Naive thymus-derived CD4-positive, alpha-beta T cell (primary cell): ENCODE measurements at regions of chr3 and their contacts with region 1.

Region 1: DNA sequence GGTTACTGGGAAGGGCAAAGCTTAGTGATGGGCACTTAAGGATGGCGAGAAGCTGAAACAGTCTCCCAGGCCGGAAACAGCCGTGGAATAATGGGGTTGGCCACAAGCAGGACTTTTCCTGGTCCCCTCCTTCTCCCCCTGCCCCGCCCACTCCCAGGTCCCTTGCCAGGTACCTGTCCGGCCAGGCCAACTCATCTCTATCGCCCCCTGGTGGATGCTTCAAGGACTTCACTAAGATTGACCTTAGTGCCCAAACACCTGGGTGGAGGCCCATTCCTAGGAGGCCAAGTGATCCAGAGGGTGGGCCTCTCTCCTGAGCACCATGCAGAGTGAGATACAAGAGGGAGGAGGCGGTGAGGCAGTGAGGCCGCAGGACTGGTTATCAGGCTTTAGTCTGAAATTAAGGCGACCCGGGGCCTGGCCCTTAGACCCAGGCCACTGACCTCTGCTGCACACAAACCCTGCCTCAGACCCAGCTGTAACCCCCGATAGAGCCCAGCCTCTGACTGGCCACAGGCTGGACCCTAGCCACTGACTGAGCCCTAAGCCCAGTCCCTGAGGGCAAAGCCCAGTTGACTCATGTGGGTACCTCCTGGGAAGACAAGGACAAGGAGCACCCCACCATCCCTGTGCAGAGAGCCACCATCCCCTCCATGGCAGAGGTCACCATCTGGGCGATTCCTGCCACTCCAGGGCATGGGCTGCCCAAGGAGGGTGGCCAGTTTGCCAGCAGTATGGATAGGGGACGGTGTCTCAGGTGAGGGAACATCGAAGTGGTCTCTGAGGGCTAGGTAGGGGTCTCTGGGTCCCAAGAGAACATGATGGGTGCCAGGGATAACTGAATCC is 37.6 kb downstream of the VIPR1 start:
- DNase-seq: peak in 8 of 9 donors; percentile 31 to 69 (median 48)
- ATAC-seq: peak; percentile 76
- H3K4me3 ChIP-seq: no peak overlapping the region
- H3K4me3 Mint-ChIP-seq: no peak overlapping the region
- H3K27ac ChIP-seq: no peak overlapping the region
- H3K27ac Mint-ChIP-seq: peak overlapping the region in 7 of 9 donors; percentile 33 to 95 (median 67)
- H3K4me1 ChIP-seq: peaks cover 0 to 9% of the 10 kb centered on the region in 2 donors
- H3K4me1 Mint-ChIP-seq: peaks cover 2 to 36% (median 31%) of the 10 kb centered on the region in 7 donors
- H3K27me3 ChIP-seq: no peaks in the 10 kb centered on the region
- H3K27me3 Mint-ChIP-seq: no peaks in the 10 kb centered on the region

Region 2: DNA sequence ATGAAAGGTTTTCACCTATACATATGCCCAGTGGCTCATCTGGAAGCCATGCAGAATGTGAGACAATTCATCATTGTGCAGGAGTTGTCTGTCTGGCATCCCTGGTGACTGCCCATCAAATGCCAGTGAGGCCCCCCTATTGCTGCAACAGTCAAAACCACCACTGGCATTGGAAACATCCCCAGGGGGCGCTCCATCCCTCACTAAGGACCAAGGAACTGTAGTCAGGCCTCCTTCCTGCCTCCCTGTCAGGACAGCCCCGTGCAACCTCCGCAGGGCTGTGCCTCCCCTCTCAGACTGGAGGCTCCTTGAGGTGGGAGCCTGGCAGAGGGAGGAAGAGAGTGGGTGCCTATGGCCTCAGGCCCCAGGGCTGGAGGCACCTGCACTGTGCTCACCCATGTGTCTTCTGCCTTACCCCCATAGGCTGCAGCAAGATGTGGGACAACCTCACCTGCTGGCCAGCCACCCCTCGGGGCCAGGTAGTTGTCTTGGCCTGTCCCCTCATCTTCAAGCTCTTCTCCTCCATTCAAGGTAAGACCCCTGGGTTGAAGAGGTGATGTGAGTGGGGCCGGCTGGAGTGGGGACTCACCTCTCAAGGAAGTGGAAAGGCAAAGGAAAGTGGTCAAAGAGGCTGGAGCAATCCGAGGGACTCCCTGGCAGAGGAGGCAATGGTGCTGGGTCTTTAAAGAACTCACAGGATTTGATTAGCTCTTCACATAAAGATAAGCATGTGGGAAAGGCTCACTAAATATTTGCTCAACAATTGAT is 21.1 kb before region 1 on chr3:
- CTCF ChIA-PET with region 1: interaction called, 37 read pairs
- POLR2A ChIA-PET with region 1: interaction called, 3 read pairs
- intact Hi-C with region 1: loop called (anchors 1 to 2 kb)
- DNase-seq: peak in 3 of 9 donors; percentile 36 to 52 (median 49)
- ATAC-seq: peak; percentile 56
- H3K4me3 ChIP-seq: no peak overlapping the region
- H3K4me3 Mint-ChIP-seq: peak overlapping the region in 6 of 10 donors; percentile 28 to 73 (median 67)
- H3K27ac ChIP-seq: peak overlapping the region; percentile 51
- H3K27ac Mint-ChIP-seq: peak overlapping the region in 8 of 9 donors; percentile 73 to 95 (median 86)
- H3K4me1 ChIP-seq: peaks cover 0 to 23% of the 10 kb centered on the region in 2 donors
- H3K4me1 Mint-ChIP-seq: peaks cover 19 to 55% (median 39%) of the 10 kb centered on the region in 7 donors
- H3K27me3 ChIP-seq: no peaks in the 10 kb centered on the region
- H3K27me3 Mint-ChIP-seq: no peaks in the 10 kb centered on the region

Region 3: GRCh38 chr3:42526616-42527367 is 13.3 kb before region 1 on chr3:
- CTCF ChIA-PET with region 1: interaction called, 23 read pairs
- POLR2A ChIA-PET with region 1: interaction called, 6 read pairs
- intact Hi-C with region 1: no loop called
- DNase-seq: peak in 7 of 9 donors; percentile 36 to 51 (median 44)
- ATAC-seq: peak; percentile 77
- H3K4me3 ChIP-seq: peak overlapping the region; percentile 23
- H3K4me3 Mint-ChIP-seq: peak overlapping the region; percentile 66 to 86 (median 73)
- H3K27ac ChIP-seq: peak overlapping the region; percentile 60
- H3K27ac Mint-ChIP-seq: peak overlapping the region; percentile 86 to 99 (median 92)
- H3K4me1 ChIP-seq: peaks cover 42 to 59% of the 10 kb centered on the region in 2 donors
- H3K4me1 Mint-ChIP-seq: peaks cover 39 to 83% (median 67%) of the 10 kb centered on the region in 7 donors
- H3K27me3 ChIP-seq: no peaks in the 10 kb centered on the region
- H3K27me3 Mint-ChIP-seq: no peaks in the 10 kb centered on the region

Region 4: DNA sequence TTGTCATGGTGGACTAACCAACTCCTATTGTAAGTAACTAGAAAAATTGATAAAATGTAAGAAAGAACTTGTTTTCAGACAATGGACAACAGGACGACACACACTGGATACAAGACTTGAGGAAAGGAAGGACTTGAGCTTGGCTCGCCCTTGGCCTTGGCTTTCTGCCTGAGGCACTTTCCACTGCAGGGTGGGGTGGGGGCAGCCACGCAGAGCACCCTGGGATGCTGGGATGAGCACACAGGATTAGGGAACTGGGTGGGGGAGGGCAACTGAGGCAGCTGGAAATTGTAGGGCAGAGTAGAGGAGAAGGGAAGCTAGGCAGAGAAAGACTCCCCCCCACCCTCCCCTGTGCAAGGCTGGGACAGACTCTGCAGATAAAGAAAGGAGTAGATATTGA is 188.0 kb after region 1 on chr3:
- CTCF ChIA-PET with region 1: no interaction called
- POLR2A ChIA-PET with region 1: no interaction called
- intact Hi-C with region 1: no loop called
- DNase-seq: no peak
- ATAC-seq: no peak
- H3K4me3 ChIP-seq: no peak overlapping the region
- H3K4me3 Mint-ChIP-seq: no peak overlapping the region
- H3K27ac ChIP-seq: no peak overlapping the region
- H3K27ac Mint-ChIP-seq: no peak overlapping the region
- H3K4me1 ChIP-seq: no peaks in the 10 kb centered on the region
- H3K4me1 Mint-ChIP-seq: no peaks in the 10 kb centered on the region
- H3K27me3 ChIP-seq: no peaks in the 10 kb centered on the region
- H3K27me3 Mint-ChIP-seq: peaks cover 7 to 19% (median 10%) of the 10 kb centered on the region in 5 donors